ENCODE measurements at regions of chr19 and their contacts with region 1.

Region 1: DNA sequence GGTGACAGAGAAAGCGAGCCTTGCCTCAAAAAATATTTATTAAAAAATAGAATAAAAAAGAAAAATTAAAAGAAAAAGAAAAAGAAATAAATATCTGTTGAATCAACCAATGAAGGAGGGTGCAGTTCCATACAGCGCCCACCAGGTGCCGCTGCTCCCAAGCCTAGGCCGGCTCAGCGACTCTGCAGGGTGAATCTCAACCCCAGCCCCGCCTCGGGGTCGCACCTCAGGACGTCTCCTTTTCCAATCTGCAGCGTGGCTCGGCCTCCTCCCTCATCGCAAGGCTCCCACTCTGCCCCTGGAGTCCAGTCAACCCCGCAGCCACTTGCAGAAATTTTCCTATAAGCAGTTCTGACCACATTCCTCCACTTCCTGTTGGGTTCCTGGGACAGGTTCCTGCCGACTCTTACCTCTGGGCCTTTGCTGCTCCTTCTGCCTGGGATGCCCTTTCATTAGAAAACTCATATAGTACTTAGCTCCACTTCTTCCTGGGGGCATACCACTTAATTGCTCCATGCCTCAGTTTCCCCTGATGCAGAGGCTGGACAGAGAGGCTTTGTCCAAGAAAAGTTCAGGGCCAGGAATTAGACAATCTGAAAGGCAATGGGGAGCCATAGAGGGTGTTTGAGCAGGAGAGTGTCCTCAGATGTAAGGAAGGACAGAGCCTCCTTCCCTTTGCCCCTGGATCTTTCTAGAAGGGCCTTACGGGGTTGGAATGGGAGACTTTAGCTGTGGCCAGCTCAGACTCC is 24.3 kb downstream of the NFILZ start:
- H3K4me3 Mint-ChIP-seq: peak overlapping the region; percentile 67
- H3K27ac Mint-ChIP-seq: no peak overlapping the region
- H3K4me1 Mint-ChIP-seq: peaks cover 31% of the 10 kb centered on the region
- H3K27me3 Mint-ChIP-seq: peaks cover 25% of the 10 kb centered on the region

Region 2: DNA sequence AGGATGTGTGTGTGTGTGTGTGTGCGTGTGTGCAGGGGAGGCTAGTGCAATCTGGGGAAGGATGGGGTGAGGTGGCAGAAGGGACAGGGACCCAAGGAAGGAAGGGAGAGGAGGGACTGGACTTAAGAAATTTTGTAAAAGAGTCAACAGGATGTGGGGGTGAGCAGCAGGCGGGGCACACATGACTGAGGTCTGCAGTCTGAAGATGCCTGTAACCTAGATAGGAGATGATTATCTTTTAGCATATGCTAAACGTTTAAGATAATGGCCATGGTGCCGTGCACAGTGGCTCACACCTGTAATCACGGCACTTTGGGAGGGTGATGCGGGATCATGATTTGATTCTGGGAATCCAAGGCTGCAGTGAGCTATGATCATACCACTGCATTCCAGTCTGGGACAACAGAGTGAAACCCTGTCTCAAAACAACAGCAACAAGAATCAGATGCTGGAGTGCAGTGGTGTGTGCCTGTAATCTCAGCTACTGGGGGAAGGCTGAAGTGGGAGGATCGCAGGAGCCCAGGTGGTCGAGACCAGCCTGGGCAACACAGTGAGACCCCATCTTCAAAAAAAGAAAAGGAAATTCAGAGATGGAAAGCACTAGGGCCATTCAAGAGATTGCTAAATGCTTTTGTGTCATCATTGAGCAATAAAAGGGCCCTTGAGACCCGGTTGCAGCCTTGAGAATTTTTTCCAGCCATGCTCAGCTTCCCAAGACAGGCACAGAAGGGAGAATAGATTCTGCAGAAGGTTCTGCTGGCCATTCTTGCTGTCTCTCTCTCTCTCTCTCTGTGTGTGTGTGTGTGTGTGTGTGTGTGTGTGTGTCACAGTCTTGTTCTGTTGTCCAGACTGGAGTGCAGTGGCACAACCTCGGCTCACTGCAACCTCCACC is 137.0 kb before region 1 on chr19:
- intact Hi-C with region 1: no loop called
- H3K4me3 Mint-ChIP-seq: no peak overlapping the region
- H3K27ac Mint-ChIP-seq: peak overlapping the region; percentile 53
- H3K4me1 Mint-ChIP-seq: peaks cover 56% of the 10 kb centered on the region
- H3K27me3 Mint-ChIP-seq: no peaks in the 10 kb centered on the region

Region 3: GRCh38 chr19:8697671-8698432 is 43.1 kb after region 1 on chr19:
- intact Hi-C with region 1: loop called (anchors 1 kb)
- H3K4me3 Mint-ChIP-seq: no peak overlapping the region
- H3K27ac Mint-ChIP-seq: no peak overlapping the region
- H3K4me1 Mint-ChIP-seq: peaks cover 8% of the 10 kb centered on the region
- H3K27me3 Mint-ChIP-seq: peaks cover 66% of the 10 kb centered on the region

Measured in dendritic cell treated with granulocyte-macrophage colony-stimulating factor and Interleukin-4, amounts not matched to agents 40 ng/mL and 50 ng/mL, for 4 days (primary cell).